ENCODE measurements at regions of chr6 and their contacts with region 1.

Region 1: GRCh38 chr6:89819336-89820130 is at the start of gene MDN1:
- DNase-seq: peak; percentile 92
- ATAC-seq: peak; percentile 93
- H3K4me3 Mint-ChIP-seq: peak within 1 kb of the TSS; percentile 86
- H3K27ac Mint-ChIP-seq: peak within 1 kb of the TSS; percentile 96
- H3K4me1 Mint-ChIP-seq: peaks cover 29% of the 10 kb centered on the region
- H3K27me3 Mint-ChIP-seq: no peaks in the 10 kb centered on the region
- CTCF ChIP-seq: no peak
- total RNA-seq, gene MDN1: 69.0 TPM

Region 2: DNA sequence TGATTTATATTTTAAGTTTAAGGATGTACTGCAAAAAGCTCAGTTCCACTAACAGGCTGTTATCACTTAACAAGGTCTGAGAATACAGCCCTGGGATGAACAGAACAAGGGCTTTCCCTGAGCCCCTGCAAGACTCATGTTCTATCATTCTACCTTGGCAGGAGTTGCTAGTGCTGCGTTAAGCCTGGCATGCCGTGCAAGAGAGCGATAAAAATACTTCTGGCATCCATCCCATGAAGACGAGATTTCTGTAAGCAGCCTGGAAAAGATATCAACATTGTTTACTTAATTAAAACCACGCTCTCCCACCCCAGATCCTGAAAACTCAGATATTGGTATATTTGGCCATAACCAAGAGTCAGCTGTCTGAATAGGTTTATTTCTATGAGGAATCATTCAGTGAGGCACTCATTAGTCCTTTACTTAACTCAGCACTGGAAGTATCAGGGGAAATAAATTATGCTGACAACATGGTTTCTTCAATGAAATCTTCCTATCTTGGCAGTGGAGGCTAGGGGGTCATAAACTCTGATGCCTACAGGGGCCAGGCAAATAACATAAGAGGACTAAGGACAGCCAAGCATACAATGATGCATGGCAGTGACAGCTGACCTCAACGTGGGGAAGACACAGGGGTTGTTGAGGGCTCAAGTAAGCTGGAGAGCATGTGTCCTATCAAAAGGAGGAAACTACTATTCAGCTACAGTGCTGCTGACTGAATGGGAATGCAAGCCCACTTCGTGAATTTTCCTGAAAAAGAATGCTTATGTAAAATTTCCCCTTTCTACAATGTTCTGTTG is 143.4 kb before region 1 on chr6:
- CTCF ChIA-PET with region 1: no interaction called
- POLR2A ChIA-PET with region 1: no interaction called
- intact Hi-C with region 1: no loop called
- DNase-seq: no peak
- ATAC-seq: no peak
- H3K4me3 Mint-ChIP-seq: no peak overlapping the region
- H3K27ac Mint-ChIP-seq: no peak overlapping the region
- H3K4me1 Mint-ChIP-seq: no peaks in the 10 kb centered on the region
- H3K27me3 Mint-ChIP-seq: no peaks in the 10 kb centered on the region
- CTCF ChIP-seq: no peak

Region 3: GRCh38 chr6:89763550-89763949 is 56.0 kb before region 1 on chr6:
- CTCF ChIA-PET with region 1: no interaction called
- POLR2A ChIA-PET with region 1: no interaction called
- intact Hi-C with region 1: no loop called
- DNase-seq: no peak
- ATAC-seq: no peak
- H3K4me3 Mint-ChIP-seq: no peak overlapping the region
- H3K27ac Mint-ChIP-seq: no peak overlapping the region
- H3K4me1 Mint-ChIP-seq: no peaks in the 10 kb centered on the region
- H3K27me3 Mint-ChIP-seq: no peaks in the 10 kb centered on the region
- CTCF ChIP-seq: no peak

Region 4: GRCh38 chr6:89829591-89830385 is 10.3 kb after region 1 on chr6 and contains the start of gene CASP8AP2:
- CTCF ChIA-PET with region 1: interaction called, 20 read pairs
- POLR2A ChIA-PET with region 1: interaction called, 64 read pairs
- intact Hi-C with region 1: no loop called
- DNase-seq: peak; percentile 99
- ATAC-seq: peak; percentile 95
- H3K4me3 Mint-ChIP-seq: peak within 1 kb of the TSS; percentile 96
- H3K27ac Mint-ChIP-seq: peak within 1 kb of the TSS; percentile 99
- H3K4me1 Mint-ChIP-seq: peaks cover 26% of the 10 kb centered on the region
- H3K27me3 Mint-ChIP-seq: no peaks in the 10 kb centered on the region
- CTCF ChIP-seq: no peak
- total RNA-seq, gene CASP8AP2: 33.3 to 33.6 TPM

Region 5: GRCh38 chr6:89834884-89835792 is 15.6 kb after region 1 on chr6:
- CTCF ChIA-PET with region 1: interaction called, 20 read pairs
- POLR2A ChIA-PET with region 1: interaction called, 64 read pairs
- intact Hi-C with region 1: no loop called
- DNase-seq: peak; percentile 61
- ATAC-seq: peak; percentile 90
- H3K4me3 Mint-ChIP-seq: peak overlapping the region; percentile 50
- H3K27ac Mint-ChIP-seq: peak overlapping the region; percentile 89
- H3K4me1 Mint-ChIP-seq: peaks cover 57% of the 10 kb centered on the region
- H3K27me3 Mint-ChIP-seq: no peaks in the 10 kb centered on the region
- CTCF ChIP-seq: no peak

Measured in activated CD8-positive, alpha-beta T cell treated with anti-CD3 and anti-CD28 coated beads for 36 hours (primary cell).